Activated T-helper 1 cell treated with anti-CD3 and anti-CD28 coated beads, Interleukin-12 subunit alpha, Interleukin-12 subunit beta, Interleukin-2, Interleukin-4 antibody, amounts not matched to agents 30 ng/mL and 10 ng/mL and 1 ng/mL, durations not matched to agents 14 hours and 24 hours and 36 hours (primary cell): ENCODE measurements at regions of chr5 and their contacts with region 1.

Region 1: GRCh38 chr5:36241631-36242533 is at the start of gene NADK2:
- DNase-seq: peak; percentile 93
- H3K4me3 Mint-ChIP-seq: peak within 1 kb of the TSS; percentile 90
- H3K27ac Mint-ChIP-seq: peak within 1 kb of the TSS; percentile 96
- H3K4me1 Mint-ChIP-seq: peaks cover 39% of the 10 kb centered on the region
- H3K27me3 Mint-ChIP-seq: peaks cover 4% of the 10 kb centered on the region
- total RNA-seq, gene NADK2: 21.7 and 25.1 TPM in 2 replicates

Region 2: GRCh38 chr5:34915139-34915855 is 1326.6 kb before region 1 on chr5 and contains the starts of genes BRIX1 and RAD1:
- intact Hi-C with region 1: loop called (anchors 1 kb)
- DNase-seq: peak; percentile 94
- H3K4me3 Mint-ChIP-seq: no peak within 1 kb of the TSS
- H3K27ac Mint-ChIP-seq: peak within 1 kb of the TSS; percentile 74
- H3K4me1 Mint-ChIP-seq: peaks cover 35% of the 10 kb centered on the region
- H3K27me3 Mint-ChIP-seq: no peaks in the 10 kb centered on the region
- total RNA-seq, gene BRIX1: 110 TPM in 2 replicates
- total RNA-seq, gene RAD1: 45.7 and 47.1 TPM in 2 replicates

Region 3: GRCh38 chr5:36079200-36079761 is 162.6 kb before region 1 on chr5:
- intact Hi-C with region 1: loop called (anchors 1 kb)
- DNase-seq: no peak
- H3K4me3 Mint-ChIP-seq: no peak overlapping the region
- H3K27ac Mint-ChIP-seq: no peak overlapping the region
- H3K4me1 Mint-ChIP-seq: no peaks in the 10 kb centered on the region
- H3K27me3 Mint-ChIP-seq: peaks cover 32% of the 10 kb centered on the region

Region 4: DNA sequence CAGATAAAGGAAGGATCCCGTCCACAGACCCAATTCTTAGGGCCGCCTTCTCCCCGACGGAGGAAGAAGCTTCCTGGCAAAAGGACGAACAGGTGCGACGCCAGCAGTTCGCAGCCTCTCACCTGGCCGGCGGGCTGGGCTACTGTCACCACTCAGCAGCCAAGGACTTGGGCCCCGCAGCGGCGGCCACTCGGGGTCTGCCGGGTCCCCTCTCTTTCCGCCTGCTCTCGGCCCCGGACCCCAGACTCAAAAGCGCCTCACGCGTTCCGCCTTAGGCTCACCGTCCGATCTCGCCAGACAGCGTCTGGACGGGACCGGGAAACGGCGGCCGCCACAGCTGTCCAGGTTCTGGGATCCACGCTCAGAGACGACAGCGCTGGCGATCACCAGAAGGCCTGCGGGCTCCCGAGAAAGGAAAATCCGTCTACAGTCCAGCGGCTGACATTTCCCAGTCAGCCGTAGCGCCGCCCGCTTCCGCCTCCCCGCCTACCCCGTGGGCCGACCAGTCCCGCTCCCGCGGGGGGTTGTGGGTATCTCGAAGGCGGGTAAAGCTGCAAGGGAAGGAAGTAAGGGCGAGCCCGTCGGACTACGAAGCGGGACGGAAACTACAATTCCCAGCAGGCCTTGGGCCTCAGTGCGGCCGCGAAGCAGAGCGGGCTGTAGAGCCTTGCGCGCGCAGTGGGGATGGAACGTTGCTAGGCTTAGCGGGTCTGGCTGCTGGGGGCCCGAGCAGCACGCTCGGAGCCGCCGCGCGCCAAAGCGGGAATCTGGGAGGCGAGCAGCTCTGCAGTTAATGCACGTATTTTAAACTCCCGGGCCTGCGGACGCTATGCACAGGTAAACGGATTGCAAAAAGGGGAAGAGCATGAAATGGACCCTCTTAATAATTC is 90.2 kb before region 1 on chr5 and contains the starts of genes LMBRD2 and SKP2:
- intact Hi-C with region 1: loop called (anchors 1 kb)
- DNase-seq: peak; percentile 97
- H3K4me3 Mint-ChIP-seq: peak within 1 kb of the TSS; percentile 97
- H3K27ac Mint-ChIP-seq: peak within 1 kb of the TSS; percentile 79
- H3K4me1 Mint-ChIP-seq: peaks cover 59% of the 10 kb centered on the region
- H3K27me3 Mint-ChIP-seq: no peaks in the 10 kb centered on the region
- total RNA-seq, gene LMBRD2: 8.9 and 12.3 TPM in 2 replicates
- total RNA-seq, gene SKP2: 54.6 and 61.2 TPM in 2 replicates

Region 5: GRCh38 chr5:36363101-36363500 is 121.2 kb after region 1 on chr5:
- intact Hi-C with region 1: loop called (anchors 5 kb)
- DNase-seq: no peak
- H3K4me3 Mint-ChIP-seq: no peak overlapping the region
- H3K27ac Mint-ChIP-seq: no peak overlapping the region
- H3K4me1 Mint-ChIP-seq: peaks cover 17% of the 10 kb centered on the region
- H3K27me3 Mint-ChIP-seq: no peaks in the 10 kb centered on the region

Region 6: DNA sequence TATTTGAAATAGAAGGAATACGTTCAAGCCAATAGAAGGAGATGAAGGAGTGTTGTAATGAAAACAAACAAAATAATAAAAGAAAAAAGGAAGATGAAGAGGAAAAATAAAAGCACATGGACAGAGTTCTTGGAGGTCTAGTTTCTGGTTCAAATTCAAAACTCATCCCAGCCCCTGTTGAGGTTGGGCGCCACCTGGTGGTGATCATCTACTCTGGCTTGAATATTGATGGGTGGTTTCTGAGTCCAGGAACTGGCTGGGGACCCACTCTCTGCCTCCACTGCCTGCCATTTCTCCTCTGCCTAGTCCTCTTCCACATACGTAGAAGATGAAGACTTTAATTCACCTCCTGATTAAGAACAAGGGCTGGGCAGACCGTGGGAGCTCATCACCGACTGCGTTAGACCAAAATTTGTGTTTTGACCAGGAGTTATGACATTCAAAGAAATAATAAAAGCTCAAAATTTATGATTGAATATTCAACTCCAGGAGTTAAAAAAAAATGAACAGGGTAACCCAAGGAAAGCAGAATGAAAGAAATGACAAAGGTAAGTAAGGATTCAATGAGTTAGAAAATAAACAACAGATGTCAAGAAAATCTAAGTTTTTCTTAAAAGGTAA is 265.6 kb after region 1 on chr5:
- intact Hi-C with region 1: loop called (anchors 1 kb)
- DNase-seq: peak; percentile 47
- H3K4me3 Mint-ChIP-seq: no peak overlapping the region
- H3K27ac Mint-ChIP-seq: no peak overlapping the region
- H3K4me1 Mint-ChIP-seq: no peaks in the 10 kb centered on the region
- H3K27me3 Mint-ChIP-seq: peaks cover 9% of the 10 kb centered on the region

Region 7: GRCh38 chr5:37370864-37371726 is 1129.2 kb after region 1 on chr5 and contains the start of gene NUP155:
- intact Hi-C with region 1: loop called (anchors 5 kb)
- DNase-seq: peak; percentile 87
- H3K4me3 Mint-ChIP-seq: peak within 1 kb of the TSS; percentile 94
- H3K27ac Mint-ChIP-seq: peak within 1 kb of the TSS; percentile 97
- H3K4me1 Mint-ChIP-seq: peaks cover 37% of the 10 kb centered on the region
- H3K27me3 Mint-ChIP-seq: no peaks in the 10 kb centered on the region
- total RNA-seq, gene NUP155: 72.5 and 82.1 TPM in 2 replicates